HepG2 (cell line): ENCODE measurements at regions of chr6 and their contacts with region 1.

Region 1: GRCh38 chr6:142845624-142846458 is 99.1 kb downstream of the HIVEP2 start:
- DNase-seq: peak; percentile 99
- ATAC-seq: peak; percentile 100
- H3K4me3 ChIP-seq: peak overlapping the region; percentile 50 to 72 (median 71)
- H3K27ac ChIP-seq: peak overlapping the region; percentile 91
- H3K4me1 ChIP-seq: peaks cover 54% of the 10 kb centered on the region
- H3K27me3 ChIP-seq: no peaks in the 10 kb centered on the region
- CTCF ChIP-seq: peak; percentile 79
- EP300 ChIP-seq: peak; percentile 71 to 88; a peak in 3 of 4 replicates
- POLR2A ChIP-seq: peak; percentile 65 to 95
- RAD21 ChIP-seq: peak; percentile 90

Region 2: DNA sequence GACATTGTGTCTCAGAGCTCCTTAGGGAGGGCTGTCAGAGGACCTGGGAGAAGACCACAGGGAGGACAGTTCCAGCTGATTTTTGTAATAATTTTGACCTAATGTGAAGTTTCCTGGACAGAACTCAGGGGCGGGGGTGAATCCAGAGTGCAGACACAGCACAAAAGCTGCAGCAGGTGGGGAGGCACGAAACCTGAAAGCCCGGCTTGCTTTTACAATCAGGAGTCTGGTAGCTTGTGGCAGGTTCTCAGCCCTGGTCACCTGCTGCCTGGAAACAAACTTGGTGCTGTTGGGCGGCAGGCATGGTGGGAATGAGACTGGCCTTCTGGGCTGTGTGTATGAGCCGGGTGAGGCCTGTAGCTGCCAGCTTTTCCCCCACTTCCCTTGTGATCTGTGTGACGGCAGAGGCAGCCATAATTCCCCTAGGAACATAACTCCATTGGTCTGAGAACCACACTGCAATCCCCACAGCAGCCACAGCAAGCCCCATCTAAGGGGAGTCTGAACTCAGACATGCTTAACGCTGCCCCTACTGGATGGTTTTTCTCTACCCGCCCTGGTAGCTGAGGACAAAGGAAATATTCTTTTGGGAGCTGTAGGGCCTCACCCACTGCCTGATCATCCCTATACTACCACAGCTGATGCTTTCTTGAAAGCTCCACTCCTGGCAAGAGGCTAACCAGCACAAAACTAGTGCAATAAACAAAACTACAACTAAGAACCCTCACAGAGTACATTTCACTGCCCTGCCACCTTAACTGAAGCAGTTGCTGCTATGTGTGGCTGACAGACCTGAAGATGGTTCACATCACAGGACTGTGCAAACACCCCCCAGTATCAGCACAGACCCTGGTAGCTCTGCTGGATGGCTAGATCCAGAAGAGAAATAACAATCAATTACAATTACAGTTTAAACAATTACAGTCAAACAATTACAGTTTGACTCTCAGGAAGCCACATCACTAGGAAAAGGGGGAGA is 1768.2 kb before region 1 on chr6:
- CTCF ChIA-PET with region 1: no interaction called
- POLR2A ChIA-PET with region 1: no interaction called
- in situ Hi-C with region 1: no loop called
- intact Hi-C with region 1: no loop called
- DNase-seq: peak; percentile 80
- ATAC-seq: peak; percentile 100
- H3K4me3 ChIP-seq: peak overlapping the region; percentile 27 to 60 (median 46); a peak in 5 of 6 replicates
- H3K27ac ChIP-seq: no peak overlapping the region
- H3K4me1 ChIP-seq: peaks cover 9% of the 10 kb centered on the region; the same call in 1 of the 2 replicates
- H3K27me3 ChIP-seq: no peaks in the 10 kb centered on the region
- CTCF ChIP-seq: peak; percentile 58
- EP300 ChIP-seq: no peak
- POLR2A ChIP-seq: no peak
- RAD21 ChIP-seq: peak; percentile 57; the same call in 1 of the 2 replicates

Region 3: DNA sequence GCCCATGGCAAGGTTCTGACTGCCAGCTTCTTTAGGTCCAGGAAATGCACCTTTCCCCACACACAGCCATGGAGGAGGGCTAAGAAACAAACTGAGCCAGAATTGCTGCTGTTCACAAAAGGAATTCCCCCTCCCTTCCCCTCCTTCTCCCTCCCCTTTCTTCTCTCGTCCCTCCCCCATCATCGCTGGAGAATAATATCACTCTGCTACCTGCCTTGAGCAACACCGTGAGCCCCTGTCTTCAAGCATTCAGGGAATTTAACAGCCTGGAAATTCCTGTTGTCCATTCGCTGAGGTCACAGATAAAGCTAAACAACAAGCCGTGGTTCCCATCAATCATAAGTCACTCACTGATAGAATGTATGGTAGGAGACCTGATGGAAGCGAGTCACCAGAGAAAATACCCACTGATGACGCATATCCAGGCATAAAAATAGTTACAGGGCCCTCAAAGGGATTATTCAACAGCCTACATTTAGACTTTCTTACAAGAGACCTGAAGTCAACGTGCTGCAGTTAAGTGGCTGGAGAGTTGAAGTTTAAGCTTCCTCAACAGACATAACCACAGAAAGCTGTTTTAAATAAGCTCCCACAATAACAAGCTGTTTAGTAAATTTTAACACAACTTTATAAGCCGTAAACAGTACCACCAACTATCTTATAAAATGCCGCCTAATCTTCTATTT is 39.5 kb after region 1 on chr6:
- CTCF ChIA-PET with region 1: no interaction called
- POLR2A ChIA-PET with region 1: no interaction called
- in situ Hi-C with region 1: no loop called
- intact Hi-C with region 1: loop called (anchors 5 kb)
- DNase-seq: peak; percentile 84
- ATAC-seq: peak; percentile 60
- H3K4me3 ChIP-seq: no peak overlapping the region
- H3K27ac ChIP-seq: no peak overlapping the region
- H3K4me1 ChIP-seq: peaks cover 27% of the 10 kb centered on the region
- H3K27me3 ChIP-seq: no peaks in the 10 kb centered on the region
- CTCF ChIP-seq: no peak
- EP300 ChIP-seq: no peak
- POLR2A ChIP-seq: no peak
- RAD21 ChIP-seq: no peak

Region 4: DNA sequence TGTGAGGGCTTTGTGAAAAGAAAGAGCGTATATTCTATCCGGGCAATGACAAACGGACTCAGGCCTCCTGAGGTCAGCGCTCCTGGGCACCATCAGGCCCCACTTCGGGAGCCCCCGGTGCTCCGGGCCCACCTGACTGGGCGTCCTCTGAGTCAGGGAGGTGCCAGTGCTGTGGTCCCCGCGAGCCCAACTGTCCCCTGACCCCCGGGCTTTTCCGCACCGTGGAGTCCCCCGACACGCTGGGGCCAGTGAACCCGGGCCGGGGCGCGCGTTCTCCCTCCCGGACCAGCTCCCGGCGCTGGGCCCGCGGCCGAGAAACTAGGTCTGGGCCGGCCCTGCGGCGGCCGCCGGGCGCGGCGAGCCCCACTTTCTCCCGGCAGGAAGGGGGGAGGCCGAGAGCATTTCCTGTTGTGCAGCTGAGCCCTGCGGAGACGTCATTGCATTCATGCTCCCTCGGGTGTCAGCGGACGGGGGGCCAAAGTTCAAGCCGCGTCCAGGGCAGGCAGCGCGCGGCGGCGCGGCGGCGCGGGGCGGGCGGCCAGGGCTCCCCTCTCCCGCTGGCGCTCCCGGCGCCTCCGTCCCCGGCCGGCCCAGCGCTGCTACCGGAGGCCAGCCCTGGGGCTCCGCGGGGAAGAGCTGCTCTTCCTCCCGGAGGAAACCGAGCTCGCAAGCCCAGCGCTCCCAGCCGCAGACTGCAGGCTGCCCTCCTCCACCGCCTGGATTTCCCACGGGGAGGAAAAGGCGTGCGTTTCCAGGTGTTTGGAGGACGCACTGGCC is 80.8 kb after region 1 on chr6:
- CTCF ChIA-PET with region 1: no interaction called
- POLR2A ChIA-PET with region 1: interaction called, 14 read pairs
- in situ Hi-C with region 1: no loop called
- intact Hi-C with region 1: loop called (anchors 5 kb)
- DNase-seq: peak; percentile 93
- ATAC-seq: peak; percentile 97
- H3K4me3 ChIP-seq: peak overlapping the region; percentile 84 to 99 (median 93)
- H3K27ac ChIP-seq: peak overlapping the region; percentile 99
- H3K4me1 ChIP-seq: peaks cover 38% of the 10 kb centered on the region
- H3K27me3 ChIP-seq: no peaks in the 10 kb centered on the region; a peak in 1 of 5 replicates
- CTCF ChIP-seq: no peak
- EP300 ChIP-seq: peak; percentile 57 to 85; a peak in 3 of 4 replicates
- POLR2A ChIP-seq: peak; percentile 84 to 93; a peak in 3 of 4 replicates
- RAD21 ChIP-seq: peak; percentile 83